GM12878 (cell line): ENCODE measurements at regions of chr6 and their contacts with region 1.

Region 1: GRCh38 chr6:16635810-16636602 is 125.3 kb downstream of the ATXN1 start:
- DNase-seq: peak; percentile 80
- ATAC-seq: peak; percentile 81
- H3K4me3 ChIP-seq: peak overlapping the region; percentile 36; the same call in 1 of the 2 replicates
- H3K27ac ChIP-seq: peak overlapping the region; percentile 66
- H3K4me1 ChIP-seq: peaks cover 39% of the 10 kb centered on the region
- H3K27me3 ChIP-seq: no peaks in the 10 kb centered on the region
- CTCF ChIP-seq: no peak
- EP300 ChIP-seq: peak in 1 of 2 experiments; percentile 20; a peak in 2 of 4 replicates
- POLR2A ChIP-seq: no peak
- RAD21 ChIP-seq: no peak

Region 2: GRCh38 chr6:16596616-16597331 is 39.2 kb before region 1 on chr6:
- CTCF ChIA-PET with region 1: interaction called, 8 read pairs
- POLR2A ChIA-PET with region 1: interaction called, 5 read pairs
- RAD21 ChIA-PET with region 1: interaction called, 22 read pairs
- SMC1A ChIA-PET with region 1: interaction called, 46 read pairs
- in situ Hi-C with region 1: no loop called
- intact Hi-C with region 1: loop called (anchors 1 kb)
- DNase-seq: no peak
- ATAC-seq: no peak
- H3K4me3 ChIP-seq: no peak overlapping the region
- H3K27ac ChIP-seq: no peak overlapping the region
- H3K4me1 ChIP-seq: peaks cover 27% of the 10 kb centered on the region
- H3K27me3 ChIP-seq: no peaks in the 10 kb centered on the region
- CTCF ChIP-seq: no peak
- EP300 ChIP-seq: no peak
- POLR2A ChIP-seq: no peak
- RAD21 ChIP-seq: no peak

Region 3: DNA sequence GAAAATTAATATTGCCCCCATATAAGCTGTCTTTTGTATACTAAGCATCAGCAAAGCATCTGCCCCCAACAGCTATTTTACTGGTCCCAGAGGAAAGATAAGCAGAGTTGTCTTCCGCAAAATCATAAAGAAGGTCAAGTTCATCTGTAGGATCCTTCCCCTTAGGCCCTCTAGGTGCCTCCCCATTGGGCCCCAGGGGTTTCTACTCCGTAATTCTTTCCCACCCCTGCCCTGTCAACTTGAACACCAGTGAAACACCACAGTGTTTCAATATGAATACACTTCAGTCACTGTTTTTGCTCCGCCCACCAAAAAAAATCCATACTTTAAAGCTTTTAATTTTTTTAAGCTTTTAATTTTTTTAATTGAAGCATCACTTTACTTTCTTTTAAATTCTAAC is 34.0 kb before region 1 on chr6:
- CTCF ChIA-PET with region 1: interaction called, 3 read pairs
- POLR2A ChIA-PET with region 1: interaction called, 7 read pairs
- RAD21 ChIA-PET with region 1: interaction called, 12 read pairs
- SMC1A ChIA-PET with region 1: interaction called, 46 read pairs
- in situ Hi-C with region 1: no loop called
- intact Hi-C with region 1: no loop called
- DNase-seq: peak; percentile 53
- ATAC-seq: peak; percentile 94
- H3K4me3 ChIP-seq: no peak overlapping the region
- H3K27ac ChIP-seq: no peak overlapping the region
- H3K4me1 ChIP-seq: peaks cover 32% of the 10 kb centered on the region
- H3K27me3 ChIP-seq: no peaks in the 10 kb centered on the region
- CTCF ChIP-seq: no peak
- EP300 ChIP-seq: peak; percentile 34 to 69; a peak in 2 of 4 replicates
- POLR2A ChIP-seq: no peak
- RAD21 ChIP-seq: no peak

Region 4: GRCh38 chr6:16625291-16626265 is 10.4 kb before region 1 on chr6:
- CTCF ChIA-PET with region 1: no interaction called
- POLR2A ChIA-PET with region 1: interaction called, 3 read pairs
- RAD21 ChIA-PET with region 1: interaction called, 3 read pairs
- SMC1A ChIA-PET with region 1: interaction called, 20 read pairs
- in situ Hi-C with region 1: no loop called
- intact Hi-C with region 1: no loop called
- DNase-seq: no peak
- ATAC-seq: no peak
- H3K4me3 ChIP-seq: no peak overlapping the region
- H3K27ac ChIP-seq: no peak overlapping the region
- H3K4me1 ChIP-seq: peaks cover 11% of the 10 kb centered on the region
- H3K27me3 ChIP-seq: no peaks in the 10 kb centered on the region
- CTCF ChIP-seq: no peak
- EP300 ChIP-seq: no peak
- POLR2A ChIP-seq: no peak
- RAD21 ChIP-seq: no peak

Region 5: GRCh38 chr6:16651871-16652270 is 15.9 kb after region 1 on chr6:
- CTCF ChIA-PET with region 1: interaction called, 3 read pairs
- POLR2A ChIA-PET with region 1: interaction called, 14 read pairs
- RAD21 ChIA-PET with region 1: interaction called, 14 read pairs
- SMC1A ChIA-PET with region 1: interaction called, 18 read pairs
- in situ Hi-C with region 1: no loop called
- intact Hi-C with region 1: no loop called
- DNase-seq: no peak
- ATAC-seq: peak; percentile 86
- H3K4me3 ChIP-seq: no peak overlapping the region
- H3K27ac ChIP-seq: no peak overlapping the region
- H3K4me1 ChIP-seq: peaks cover 18% of the 10 kb centered on the region
- H3K27me3 ChIP-seq: no peaks in the 10 kb centered on the region
- CTCF ChIP-seq: no peak
- EP300 ChIP-seq: no peak
- POLR2A ChIP-seq: no peak
- RAD21 ChIP-seq: no peak

Region 6: DNA sequence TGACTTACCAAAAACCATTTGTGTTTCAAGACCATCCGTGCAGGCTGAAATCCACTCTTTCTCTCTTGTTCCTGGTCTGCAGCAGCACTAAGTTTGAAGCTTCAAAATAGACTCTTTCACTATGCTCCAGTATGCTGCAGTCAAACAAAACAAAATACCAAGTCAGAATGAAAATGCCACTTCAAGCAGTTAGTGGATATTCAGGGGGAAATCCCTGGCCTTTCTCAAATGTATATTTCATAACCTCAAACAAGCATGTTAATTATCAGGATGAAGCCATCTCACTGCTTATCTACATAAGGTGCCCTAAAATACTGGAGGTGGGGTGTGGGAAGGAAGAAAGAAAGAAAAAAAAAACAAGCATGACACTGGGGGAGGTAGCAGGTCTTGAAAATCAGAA is 21.8 kb after region 1 on chr6:
- CTCF ChIA-PET with region 1: no interaction called
- POLR2A ChIA-PET with region 1: interaction called, 5 read pairs
- RAD21 ChIA-PET with region 1: interaction called, 12 read pairs
- SMC1A ChIA-PET with region 1: interaction called, 18 read pairs
- in situ Hi-C with region 1: no loop called
- intact Hi-C with region 1: no loop called
- DNase-seq: no peak
- ATAC-seq: peak; percentile 76
- H3K4me3 ChIP-seq: peak overlapping the region; percentile 14; the same call in 1 of the 2 replicates
- H3K27ac ChIP-seq: peak overlapping the region; percentile 15; the same call in 1 of the 2 replicates
- H3K4me1 ChIP-seq: peaks cover 37% of the 10 kb centered on the region
- H3K27me3 ChIP-seq: no peaks in the 10 kb centered on the region
- CTCF ChIP-seq: no peak
- EP300 ChIP-seq: no peak; a peak in 1 of 4 replicates
- POLR2A ChIP-seq: no peak
- RAD21 ChIP-seq: no peak

Region 7: DNA sequence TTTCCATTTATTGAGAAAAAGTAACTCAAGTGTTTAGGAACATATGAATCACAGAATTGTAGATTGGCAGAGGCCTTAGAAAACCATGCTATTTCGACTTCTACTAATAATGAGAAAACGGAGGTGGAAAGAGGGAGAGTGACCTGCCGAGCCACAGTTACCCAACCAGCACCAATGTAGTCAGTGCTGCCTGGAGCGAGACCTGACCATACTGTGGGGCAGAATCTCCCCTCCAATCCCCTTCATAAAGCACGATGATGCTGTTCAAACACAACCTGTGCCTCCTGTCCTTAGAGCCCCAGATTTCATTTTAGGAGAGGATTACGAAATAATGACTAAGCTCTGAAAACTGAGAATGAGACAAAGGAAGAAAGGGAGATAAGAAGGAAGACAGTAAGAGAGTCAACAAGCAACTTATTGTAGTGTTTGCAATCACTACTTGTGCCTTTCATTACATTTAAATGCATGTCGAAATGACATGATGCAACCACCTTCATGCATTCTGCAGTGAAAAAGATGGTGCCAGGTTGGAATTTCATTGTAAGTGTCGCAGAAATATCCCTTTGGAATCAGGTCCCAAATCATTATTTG is 54.7 kb after region 1 on chr6:
- CTCF ChIA-PET with region 1: interaction called, 4 read pairs
- POLR2A ChIA-PET with region 1: interaction called, 4 read pairs
- RAD21 ChIA-PET with region 1: interaction called, 5 read pairs
- SMC1A ChIA-PET with region 1: interaction called, 13 read pairs
- in situ Hi-C with region 1: no loop called
- intact Hi-C with region 1: loop called (anchors 5 kb)
- DNase-seq: no peak
- ATAC-seq: peak; percentile 92
- H3K4me3 ChIP-seq: peak overlapping the region; percentile 13; the same call in 1 of the 2 replicates
- H3K27ac ChIP-seq: peak overlapping the region; percentile 13; the same call in 1 of the 2 replicates
- H3K4me1 ChIP-seq: peaks cover 44% of the 10 kb centered on the region
- H3K27me3 ChIP-seq: no peaks in the 10 kb centered on the region
- CTCF ChIP-seq: no peak
- EP300 ChIP-seq: peak; percentile 73 to 82
- POLR2A ChIP-seq: peak; percentile 32; the same call in 1 of the 2 replicates
- RAD21 ChIP-seq: no peak

Region 8: DNA sequence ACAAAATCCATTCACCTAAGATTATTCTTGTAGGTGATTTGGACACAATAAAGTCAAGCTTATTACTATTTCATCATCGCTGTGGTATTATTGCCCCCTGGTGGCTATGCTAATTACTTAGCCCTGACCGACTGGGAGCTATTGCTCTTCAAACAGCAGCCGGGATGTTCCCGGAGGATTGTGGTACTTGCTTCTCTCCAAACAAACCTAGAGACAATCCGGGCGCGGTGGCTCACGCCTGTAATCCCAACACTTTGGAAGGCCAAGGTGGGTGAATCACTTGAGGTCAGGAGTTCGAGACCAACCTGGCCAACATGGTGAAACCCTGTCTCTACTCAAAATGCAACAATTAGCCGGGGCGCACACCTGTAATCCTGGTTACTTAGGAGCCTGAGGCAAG is 450.5 kb after region 1 on chr6:
- CTCF ChIA-PET with region 1: no interaction called
- POLR2A ChIA-PET with region 1: no interaction called
- RAD21 ChIA-PET with region 1: no interaction called
- SMC1A ChIA-PET with region 1: no interaction called
- in situ Hi-C with region 1: no loop called
- intact Hi-C with region 1: no loop called
- DNase-seq: no peak
- ATAC-seq: peak; percentile 81
- H3K4me3 ChIP-seq: no peak overlapping the region
- H3K27ac ChIP-seq: no peak overlapping the region
- H3K4me1 ChIP-seq: no peaks in the 10 kb centered on the region
- H3K27me3 ChIP-seq: no peaks in the 10 kb centered on the region
- CTCF ChIP-seq: peak; percentile 46 to 56 (median 52)
- EP300 ChIP-seq: no peak
- POLR2A ChIP-seq: no peak
- RAD21 ChIP-seq: peak; percentile 63